ENCODE measurements at regions of chr13 and their contacts with region 1.

Region 1: GRCh38 chr13:48242677-48243076 is 9.7 kb downstream of the ITM2B start:
- DNase-seq: no peak
- ATAC-seq: no peak
- H3K4me3 Mint-ChIP-seq: no peak overlapping the region
- H3K27ac Mint-ChIP-seq: no peak overlapping the region
- H3K4me1 Mint-ChIP-seq: peaks cover 15% of the 10 kb centered on the region
- H3K27me3 Mint-ChIP-seq: no peaks in the 10 kb centered on the region
- CTCF ChIP-seq: no peak

Region 2: DNA sequence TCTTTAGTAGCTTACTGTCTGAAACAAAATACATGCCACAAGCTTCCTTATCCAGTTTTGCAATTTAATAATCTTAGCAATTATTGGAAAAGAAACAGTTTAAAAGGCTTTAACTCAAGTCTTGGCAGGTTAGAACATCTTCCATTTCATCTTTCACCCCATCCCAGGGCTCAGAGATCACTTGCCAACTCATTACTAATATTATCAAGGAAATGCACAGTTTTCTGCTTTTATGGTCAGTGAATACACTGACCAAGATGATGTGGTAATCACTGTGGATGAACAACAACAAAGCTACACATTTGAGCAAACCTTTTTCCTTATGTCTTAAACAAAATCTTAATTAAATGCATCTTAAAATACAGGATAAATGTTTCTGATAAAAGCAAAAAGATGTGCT is 57.7 kb before region 1 on chr13:
- CTCF ChIA-PET with region 1: no interaction called
- POLR2A ChIA-PET with region 1: interaction called, 10 read pairs
- DNase-seq: no peak
- ATAC-seq: no peak
- H3K4me3 Mint-ChIP-seq: no peak overlapping the region
- H3K27ac Mint-ChIP-seq: no peak overlapping the region
- H3K4me1 Mint-ChIP-seq: peaks cover 22% of the 10 kb centered on the region
- H3K27me3 Mint-ChIP-seq: no peaks in the 10 kb centered on the region
- CTCF ChIP-seq: no peak

Measured in WTC11 (cell line).